Activated naive CD4-positive, alpha-beta T cell treated with anti-CD3 and anti-CD28 coated beads for 36 hours (primary cell): ENCODE measurements at regions of chr12 and their contacts with region 1.

Region 1: GRCh38 chr12:19186722-19187661 is 57.5 kb downstream of the PLEKHA5 start:
- DNase-seq: no peak
- H3K4me3 Mint-ChIP-seq: no peak overlapping the region
- H3K27ac Mint-ChIP-seq: no peak overlapping the region
- H3K4me1 Mint-ChIP-seq: no peaks in the 10 kb centered on the region
- H3K27me3 Mint-ChIP-seq: no peaks in the 10 kb centered on the region

Region 2: GRCh38 chr12:18139989-18140596 is 1046.9 kb before region 1 on chr12:
- CTCF ChIA-PET with region 1: no interaction called
- intact Hi-C with region 1: loop called (anchors 1 kb)
- DNase-seq: no peak
- H3K4me3 Mint-ChIP-seq: no peak overlapping the region
- H3K27ac Mint-ChIP-seq: no peak overlapping the region
- H3K4me1 Mint-ChIP-seq: no peaks in the 10 kb centered on the region
- H3K27me3 Mint-ChIP-seq: no peaks in the 10 kb centered on the region

Region 3: GRCh38 chr12:18250313-18250916 is 936.6 kb before region 1 on chr12:
- CTCF ChIA-PET with region 1: no interaction called
- intact Hi-C with region 1: loop called (anchors 1 kb)
- DNase-seq: peak; percentile 4
- H3K4me3 Mint-ChIP-seq: no peak overlapping the region
- H3K27ac Mint-ChIP-seq: no peak overlapping the region
- H3K4me1 Mint-ChIP-seq: no peaks in the 10 kb centered on the region
- H3K27me3 Mint-ChIP-seq: no peaks in the 10 kb centered on the region

Region 4: GRCh38 chr12:18345021-18345735 is 841.8 kb before region 1 on chr12:
- CTCF ChIA-PET with region 1: no interaction called
- intact Hi-C with region 1: no loop called
- DNase-seq: no peak
- H3K4me3 Mint-ChIP-seq: no peak overlapping the region
- H3K27ac Mint-ChIP-seq: no peak overlapping the region
- H3K4me1 Mint-ChIP-seq: no peaks in the 10 kb centered on the region
- H3K27me3 Mint-ChIP-seq: no peaks in the 10 kb centered on the region

Region 5: DNA sequence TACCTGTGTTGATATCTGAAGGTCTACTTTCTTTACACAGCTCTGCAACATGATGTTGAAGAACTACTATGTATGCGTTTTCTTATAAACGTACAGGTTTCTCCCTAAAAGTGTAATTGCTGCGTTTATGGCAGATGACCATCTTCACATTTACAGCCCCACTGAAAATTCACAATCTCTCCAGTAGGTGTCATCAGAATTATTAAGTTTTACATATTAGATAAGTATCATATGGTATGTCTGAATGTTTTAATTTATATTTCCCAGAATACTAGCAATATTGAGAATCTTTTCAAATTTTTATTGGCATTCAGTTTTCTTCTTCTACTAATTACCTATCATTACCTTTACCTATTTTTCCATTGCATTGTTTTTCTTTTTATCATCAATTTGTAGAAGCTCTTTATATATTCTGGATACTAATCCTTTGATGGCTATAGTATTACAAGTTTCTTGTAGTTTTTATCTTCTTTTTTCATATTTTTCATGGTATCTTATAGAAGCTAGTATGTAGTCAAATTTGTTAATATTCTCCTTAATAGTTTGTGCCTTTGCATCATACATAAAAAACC is 325.6 kb before region 1 on chr12:
- CTCF ChIA-PET with region 1: interaction called, 5 read pairs
- intact Hi-C with region 1: loop called (anchors 1 kb)
- DNase-seq: no peak
- H3K4me3 Mint-ChIP-seq: no peak overlapping the region
- H3K27ac Mint-ChIP-seq: no peak overlapping the region
- H3K4me1 Mint-ChIP-seq: no peaks in the 10 kb centered on the region
- H3K27me3 Mint-ChIP-seq: no peaks in the 10 kb centered on the region

Region 6: DNA sequence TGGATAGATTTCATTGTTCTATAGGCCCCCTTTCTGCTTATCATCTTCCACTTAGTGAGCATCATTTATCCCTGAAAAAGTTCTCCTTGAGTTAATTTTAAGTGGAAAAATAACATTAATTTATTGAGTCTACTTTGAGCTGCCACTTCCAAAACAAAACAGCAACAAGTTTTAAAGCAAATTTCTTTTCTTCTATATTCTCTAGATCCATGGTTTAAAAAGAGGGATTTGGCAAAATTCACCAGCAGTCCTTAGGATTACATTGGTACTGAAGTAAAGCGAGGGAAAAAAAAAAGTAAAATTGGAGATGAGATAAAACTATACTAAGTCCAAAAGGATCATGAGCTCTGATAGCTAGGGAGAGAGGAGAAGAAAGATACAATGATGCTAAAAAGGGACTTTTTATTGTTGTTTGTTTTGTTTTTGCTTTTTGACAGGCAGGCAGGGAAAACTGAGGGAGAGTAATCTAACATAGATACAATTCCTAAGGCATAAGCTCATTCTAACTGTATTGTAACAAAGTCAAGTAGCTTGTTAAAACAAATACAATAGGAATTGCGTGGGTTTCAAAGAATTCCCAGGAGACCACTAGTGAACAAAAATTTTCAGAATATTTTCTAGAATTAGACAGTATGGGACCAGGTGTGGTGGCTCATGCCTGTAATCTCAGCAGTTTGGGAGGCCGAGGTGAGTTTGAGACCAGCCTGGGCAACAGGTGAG is 76.6 kb before region 1 on chr12:
- CTCF ChIA-PET with region 1: no interaction called
- intact Hi-C with region 1: no loop called
- DNase-seq: no peak
- H3K4me3 Mint-ChIP-seq: no peak overlapping the region
- H3K27ac Mint-ChIP-seq: no peak overlapping the region
- H3K4me1 Mint-ChIP-seq: no peaks in the 10 kb centered on the region
- H3K27me3 Mint-ChIP-seq: peaks cover 4% of the 10 kb centered on the region

Region 7: DNA sequence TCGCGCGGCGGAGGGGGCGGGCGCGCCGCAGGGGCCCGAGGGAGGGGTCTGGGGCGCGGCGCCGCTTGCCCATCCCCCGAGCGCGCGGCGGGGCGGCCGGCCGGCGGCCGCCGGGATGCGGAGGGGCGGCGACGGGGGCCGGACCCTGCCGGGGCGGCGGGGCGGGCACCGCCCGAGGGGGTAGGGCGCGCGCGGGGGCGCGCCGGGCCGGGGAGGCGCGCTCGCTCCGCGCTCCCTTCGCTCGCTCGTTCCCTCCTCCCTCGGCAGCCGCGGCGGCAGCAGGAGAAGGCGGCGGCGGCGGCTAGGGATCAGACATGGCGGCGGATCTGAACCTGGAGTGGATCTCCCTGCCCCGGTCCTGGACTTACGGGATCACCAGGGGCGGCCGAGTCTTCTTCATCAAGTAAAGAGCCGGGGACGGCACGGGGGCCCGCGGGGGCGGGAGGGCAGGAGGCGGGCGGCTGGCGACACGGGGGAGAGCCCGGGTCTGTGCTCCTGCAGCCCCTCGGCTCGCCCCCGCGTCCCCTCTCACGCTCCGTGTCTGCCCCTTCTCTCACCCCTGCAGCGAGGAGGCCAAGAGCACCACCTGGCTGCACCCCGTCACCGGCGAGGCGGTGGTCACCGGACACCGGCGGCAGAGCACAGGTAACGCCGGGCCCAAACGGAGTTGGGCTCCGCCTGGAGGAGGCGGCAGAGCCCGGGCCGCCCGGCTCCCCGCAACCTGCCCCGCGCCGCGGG is 57.3 kb before region 1 on chr12 and contains the start of gene PLEKHA5:
- CTCF ChIA-PET with region 1: interaction called, 5 read pairs
- intact Hi-C with region 1: loop called (anchors 1 kb)
- DNase-seq: peak; percentile 37
- H3K4me3 Mint-ChIP-seq: peak within 1 kb of the TSS; percentile 81
- H3K27ac Mint-ChIP-seq: no peak within 1 kb of the TSS
- H3K4me1 Mint-ChIP-seq: peaks cover 16% of the 10 kb centered on the region
- H3K27me3 Mint-ChIP-seq: peaks cover 40% of the 10 kb centered on the region
- total RNA-seq, gene PLEKHA5: 0.69 to 0.81 TPM

Region 8: DNA sequence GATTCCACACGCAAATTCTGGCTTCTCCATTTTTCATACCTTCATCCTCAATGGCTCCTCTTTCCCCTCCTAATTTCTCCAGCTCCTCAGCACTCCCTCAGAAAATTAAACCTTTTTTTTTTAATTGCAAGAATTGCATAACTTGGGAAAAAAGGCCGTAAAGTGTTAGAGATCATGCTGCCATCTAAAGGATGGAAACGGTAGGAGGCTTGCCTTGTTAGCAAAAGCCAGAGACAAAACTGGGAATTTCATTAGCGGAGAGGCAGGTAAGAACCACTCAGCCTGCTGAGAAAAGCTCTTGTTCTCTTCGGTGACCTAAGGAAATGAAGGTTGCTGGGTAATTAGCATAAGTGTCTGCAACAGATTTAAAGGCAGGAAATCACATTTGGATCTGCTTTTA is 456.6 kb after region 1 on chr12:
- CTCF ChIA-PET with region 1: no interaction called
- intact Hi-C with region 1: loop called (anchors 10 kb)
- DNase-seq: no peak
- H3K4me3 Mint-ChIP-seq: no peak overlapping the region
- H3K27ac Mint-ChIP-seq: no peak overlapping the region
- H3K4me1 Mint-ChIP-seq: peaks cover 2% of the 10 kb centered on the region
- H3K27me3 Mint-ChIP-seq: no peaks in the 10 kb centered on the region

Region 9: GRCh38 chr12:19856389-19856788 is 669.4 kb after region 1 on chr12:
- CTCF ChIA-PET with region 1: no interaction called
- intact Hi-C with region 1: no loop called
- DNase-seq: no peak
- H3K4me3 Mint-ChIP-seq: no peak overlapping the region
- H3K27ac Mint-ChIP-seq: no peak overlapping the region
- H3K4me1 Mint-ChIP-seq: no peaks in the 10 kb centered on the region
- H3K27me3 Mint-ChIP-seq: peaks cover 6% of the 10 kb centered on the region